ENCODE measurements at regions of chr1 and their contacts with region 1.

Region 1: GRCh38 chr1:212284744-212285684 is at the start of gene PPP2R5A:
- DNase-seq: peak; percentile 98 to 100
- H3K4me3 ChIP-seq: peak within 1 kb of the TSS; percentile 74 to 88
- H3K27ac ChIP-seq: peak within 1 kb of the TSS; percentile 97 to 99
- H3K4me1 ChIP-seq: peaks cover 3 to 20% of the 10 kb centered on the region in 2 donors
- H3K27me3 ChIP-seq: no peaks in the 10 kb centered on the region
- CTCF ChIP-seq: peak; percentile 8 to 23 (median 11)
- total RNA-seq, gene PPP2R5A: 64.7 TPM

Region 2: DNA sequence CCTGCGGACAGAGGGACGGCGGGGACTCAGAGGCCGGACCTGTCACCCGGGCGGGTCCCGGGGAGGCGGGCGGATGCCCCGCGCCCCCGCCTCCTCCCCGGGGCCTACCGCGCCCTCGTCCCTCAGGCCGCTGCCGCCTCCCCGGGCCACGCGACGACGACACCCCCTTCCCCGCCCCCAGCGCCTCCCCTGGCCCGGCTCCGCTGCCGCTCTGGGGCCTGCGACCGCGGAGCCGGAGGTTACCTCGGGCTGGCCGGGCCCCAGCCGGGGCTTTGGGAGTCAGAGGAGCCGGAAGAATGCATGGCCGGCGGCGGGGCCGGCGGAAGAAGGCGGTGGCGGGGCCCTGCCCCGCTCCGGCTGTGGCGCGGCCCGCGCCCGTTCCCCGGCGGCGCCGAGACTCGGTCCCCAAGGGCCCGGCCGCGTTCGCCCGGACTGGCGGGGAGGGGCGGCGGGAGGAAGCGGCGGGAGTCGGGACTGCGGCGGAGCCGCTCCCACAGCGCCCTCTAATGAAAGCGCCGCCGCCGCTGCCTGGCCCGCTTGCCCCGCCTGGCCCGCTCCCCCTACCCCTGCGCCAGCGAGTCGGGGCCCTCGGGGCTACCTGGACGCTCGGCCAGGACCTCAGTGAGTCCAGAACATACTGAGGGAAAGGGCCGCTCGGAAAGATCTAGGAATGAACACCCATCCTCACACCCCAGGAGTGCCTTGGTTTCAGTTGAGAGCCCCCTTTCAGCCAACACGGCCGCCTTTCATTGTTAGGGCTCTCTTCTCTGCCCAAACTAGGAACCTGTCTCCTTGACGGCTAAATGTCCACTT is 454.5 kb before region 1 on chr1 and contains the start of gene LPGAT1:
- intact Hi-C with region 1: loop called (anchors 5 kb)
- DNase-seq: peak in 1 of 2 donors; percentile 78
- H3K4me3 ChIP-seq: peak within 1 kb of the TSS; percentile 99 to 100
- H3K27ac ChIP-seq: peak within 1 kb of the TSS; percentile 92 to 96
- H3K4me1 ChIP-seq: peaks cover 0 to 9% of the 10 kb centered on the region in 2 donors
- H3K27me3 ChIP-seq: no peaks in the 10 kb centered on the region
- CTCF ChIP-seq: peak; percentile 60 to 81 (median 72)
- total RNA-seq, gene LPGAT1: 17.1 TPM

Region 3: GRCh38 chr1:212035123-212035834 is 249.7 kb before region 1 on chr1 and contains the starts of genes DTL and INTS7:
- intact Hi-C with region 1: loop called (anchors 1 kb)
- DNase-seq: peak; percentile 96 to 99
- H3K4me3 ChIP-seq: peak within 1 kb of the TSS; percentile 64 to 78
- H3K27ac ChIP-seq: peak within 1 kb of the TSS; percentile 77 to 85
- H3K4me1 ChIP-seq: peaks cover 0 to 12% of the 10 kb centered on the region in 2 donors
- H3K27me3 ChIP-seq: no peaks in the 10 kb centered on the region
- CTCF ChIP-seq: peak; percentile 85 to 95 (median 90)
- total RNA-seq, gene DTL: not detected
- total RNA-seq, gene INTS7: 10.5 TPM

Region 4: DNA sequence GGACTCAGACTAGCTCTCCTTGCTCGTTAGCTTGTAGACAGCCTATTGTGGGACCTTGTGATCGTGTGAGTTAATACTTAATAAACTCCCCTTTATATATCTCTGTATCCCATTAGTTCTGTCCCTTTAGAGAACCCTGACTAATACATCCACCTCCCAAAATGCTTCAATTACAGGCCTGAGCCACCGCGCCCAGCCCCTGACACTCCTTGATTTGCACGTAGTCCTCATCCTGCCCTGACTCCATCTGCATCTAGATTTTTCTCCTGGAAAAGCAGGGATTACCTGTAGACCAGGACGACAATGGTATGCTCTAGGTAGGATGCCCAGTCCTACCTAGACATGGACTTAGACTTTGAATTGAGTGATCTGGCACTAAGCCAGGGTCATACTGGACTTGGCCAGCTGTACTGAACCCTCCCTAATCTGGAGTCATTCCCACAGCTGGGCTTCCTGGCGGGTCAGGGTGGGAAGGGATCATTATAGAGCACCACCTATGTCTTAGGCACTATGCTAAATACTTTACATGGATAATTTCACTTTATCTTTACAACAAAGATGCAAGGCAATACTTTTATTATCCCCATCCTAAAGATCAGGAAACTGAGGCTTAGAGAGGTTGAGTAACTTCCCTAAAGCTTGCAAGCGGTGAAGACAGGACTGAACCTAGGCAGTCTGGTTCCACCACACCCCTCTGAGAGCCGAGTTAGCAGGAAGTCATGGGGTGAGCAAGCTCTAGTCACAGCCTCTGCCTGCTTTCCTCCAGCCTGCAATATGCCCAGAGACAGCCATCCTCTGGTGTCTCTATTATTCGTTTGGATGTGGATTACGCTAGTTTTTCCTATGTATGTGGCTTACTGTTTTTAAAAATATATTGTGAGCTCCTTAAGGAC is 160.1 kb before region 1 on chr1:
- intact Hi-C with region 1: no loop called
- DNase-seq: no peak
- H3K4me3 ChIP-seq: no peak overlapping the region
- H3K27ac ChIP-seq: no peak overlapping the region
- H3K4me1 ChIP-seq: no peaks in the 10 kb centered on the region
- H3K27me3 ChIP-seq: no peaks in the 10 kb centered on the region
- CTCF ChIP-seq: no peak

Region 5: DNA sequence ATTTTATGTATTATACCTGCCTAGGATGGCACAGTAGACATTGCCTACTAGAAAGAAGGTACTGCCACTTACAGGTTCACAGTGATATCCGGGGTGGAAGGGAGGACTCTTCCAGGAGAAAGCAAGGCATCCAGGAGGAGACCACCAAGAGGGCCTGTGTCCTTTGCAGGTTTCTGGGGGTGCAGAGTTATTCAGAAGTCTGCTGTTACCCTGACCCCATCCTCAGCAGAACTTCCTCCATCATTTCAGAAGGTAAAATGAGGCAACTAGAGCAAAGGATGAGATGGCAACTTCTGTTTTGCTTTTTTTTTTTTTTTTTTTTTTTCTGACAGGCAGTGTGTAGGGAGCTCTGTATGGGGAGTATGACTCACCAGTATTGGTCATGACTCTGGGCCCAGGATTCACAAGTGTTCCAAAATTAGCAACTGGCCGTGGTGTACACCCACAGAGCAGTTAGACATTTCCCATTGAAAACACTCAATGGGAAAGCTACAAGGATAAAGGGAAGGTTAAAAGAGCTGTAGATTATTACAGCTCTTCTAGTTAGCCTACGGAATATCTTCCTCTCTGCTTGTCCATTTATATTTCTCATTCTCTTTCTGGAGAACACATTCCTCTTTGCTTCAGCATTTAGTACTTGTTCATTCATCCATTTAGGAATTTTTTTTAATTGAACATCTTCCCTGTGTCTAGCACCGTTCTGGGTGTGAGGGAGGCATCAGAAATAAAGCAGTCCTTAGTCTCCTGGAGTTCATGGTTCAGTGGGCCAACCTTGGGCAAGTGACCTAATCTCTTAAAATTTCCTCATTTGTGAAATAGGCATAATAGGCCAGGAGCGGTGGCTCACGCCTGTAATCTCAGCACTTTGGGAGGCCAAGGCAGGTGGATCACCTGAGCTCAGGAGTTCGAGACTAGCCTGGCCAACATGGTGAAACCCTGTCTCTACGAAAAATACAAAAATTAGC is 50.3 kb before region 1 on chr1:
- intact Hi-C with region 1: loop called (anchors 1 kb)
- DNase-seq: peak; percentile 54 to 86
- H3K4me3 ChIP-seq: no peak overlapping the region
- H3K27ac ChIP-seq: peak overlapping the region; percentile 62 to 65
- H3K4me1 ChIP-seq: peaks cover 0 to 14% of the 10 kb centered on the region in 2 donors
- H3K27me3 ChIP-seq: no peaks in the 10 kb centered on the region
- CTCF ChIP-seq: no peak

Region 6: GRCh38 chr1:212386029-212386428 is 101.0 kb after region 1 on chr1:
- intact Hi-C with region 1: no loop called
- DNase-seq: no peak
- H3K4me3 ChIP-seq: no peak overlapping the region
- H3K27ac ChIP-seq: no peak overlapping the region
- H3K4me1 ChIP-seq: no peaks in the 10 kb centered on the region
- H3K27me3 ChIP-seq: no peaks in the 10 kb centered on the region
- CTCF ChIP-seq: no peak

Region 7: DNA sequence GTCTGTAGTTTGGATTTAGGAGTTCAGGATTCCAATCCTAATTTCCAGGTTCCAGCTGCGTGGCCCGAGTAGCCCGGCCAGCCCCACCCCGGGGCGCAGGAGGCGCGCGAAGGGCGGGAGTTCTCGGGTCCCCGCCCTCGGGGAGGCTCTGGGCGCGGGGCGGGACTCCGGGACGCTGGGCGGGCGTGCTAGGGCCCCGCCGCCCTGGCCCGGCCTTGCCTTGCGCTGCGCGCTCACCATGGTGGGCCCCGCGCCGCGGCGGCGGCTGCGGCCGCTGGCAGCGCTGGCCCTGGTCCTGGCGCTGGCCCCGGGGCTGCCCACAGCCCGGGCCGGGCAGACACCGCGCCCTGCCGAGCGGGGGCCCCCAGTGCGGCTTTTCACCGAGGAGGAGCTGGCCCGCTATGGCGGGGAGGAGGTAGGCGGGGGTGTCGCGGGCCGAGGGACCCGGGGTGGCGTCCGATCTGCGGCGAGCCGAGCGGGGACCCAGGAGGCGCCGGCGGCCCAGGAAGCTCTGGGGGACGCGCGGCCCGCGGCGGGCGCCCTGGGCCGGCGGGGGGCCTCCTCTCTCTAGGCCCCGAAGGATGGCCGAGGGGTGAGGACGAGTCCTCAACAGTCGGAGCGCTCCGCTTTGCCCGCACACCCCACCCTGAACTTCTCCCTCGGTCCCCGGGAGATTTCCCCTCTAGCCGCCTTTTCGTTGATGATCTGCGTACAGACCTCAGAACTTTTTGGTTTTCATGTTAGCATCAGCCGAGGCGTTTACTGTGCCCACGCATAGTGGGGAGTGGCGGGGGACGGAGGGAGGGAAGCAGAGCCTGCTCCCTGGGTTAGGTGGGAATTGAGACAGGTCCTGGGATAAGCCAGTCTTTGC is 147.9 kb after region 1 on chr1 and contains the start of gene NENF:
- intact Hi-C with region 1: loop called (anchors 5 kb)
- DNase-seq: peak; percentile 50 to 92
- H3K4me3 ChIP-seq: peak within 1 kb of the TSS; percentile 87 to 97
- H3K27ac ChIP-seq: peak within 1 kb of the TSS; percentile 88 to 98
- H3K4me1 ChIP-seq: peaks cover 3 to 9% of the 10 kb centered on the region in 2 donors
- H3K27me3 ChIP-seq: no peaks in the 10 kb centered on the region
- CTCF ChIP-seq: peak in 1 of 3 experiments; percentile 14
- total RNA-seq, gene NENF: 186 TPM

Region 8: GRCh38 chr1:212608209-212608955 is 323.4 kb after region 1 on chr1 and contains the start of gene ATF3:
- intact Hi-C with region 1: loop called (anchors 1 kb)
- DNase-seq: peak; percentile 99 to 100
- H3K4me3 ChIP-seq: peak within 1 kb of the TSS; percentile 64 to 78
- H3K27ac ChIP-seq: peak within 1 kb of the TSS; percentile 96 to 99
- H3K4me1 ChIP-seq: peaks cover 0 to 25% of the 10 kb centered on the region in 2 donors
- H3K27me3 ChIP-seq: no peaks in the 10 kb centered on the region
- CTCF ChIP-seq: no peak
- total RNA-seq, gene ATF3: 79.1 TPM

Region 9: GRCh38 chr1:212699104-212699624 is 414.1 kb after region 1 on chr1:
- intact Hi-C with region 1: loop called (anchors 10 kb)
- DNase-seq: peak in 1 of 2 donors; percentile 74
- H3K4me3 ChIP-seq: peak overlapping the region; percentile 73 to 90
- H3K27ac ChIP-seq: peak overlapping the region; percentile 81 to 88
- H3K4me1 ChIP-seq: peaks cover 5 to 13% of the 10 kb centered on the region in 2 donors
- H3K27me3 ChIP-seq: no peaks in the 10 kb centered on the region
- CTCF ChIP-seq: peak in 2 of 3 experiments; percentile 47 to 61